ENCODE measurements at regions of chr1 and their contacts with region 1.

Region 1: DNA sequence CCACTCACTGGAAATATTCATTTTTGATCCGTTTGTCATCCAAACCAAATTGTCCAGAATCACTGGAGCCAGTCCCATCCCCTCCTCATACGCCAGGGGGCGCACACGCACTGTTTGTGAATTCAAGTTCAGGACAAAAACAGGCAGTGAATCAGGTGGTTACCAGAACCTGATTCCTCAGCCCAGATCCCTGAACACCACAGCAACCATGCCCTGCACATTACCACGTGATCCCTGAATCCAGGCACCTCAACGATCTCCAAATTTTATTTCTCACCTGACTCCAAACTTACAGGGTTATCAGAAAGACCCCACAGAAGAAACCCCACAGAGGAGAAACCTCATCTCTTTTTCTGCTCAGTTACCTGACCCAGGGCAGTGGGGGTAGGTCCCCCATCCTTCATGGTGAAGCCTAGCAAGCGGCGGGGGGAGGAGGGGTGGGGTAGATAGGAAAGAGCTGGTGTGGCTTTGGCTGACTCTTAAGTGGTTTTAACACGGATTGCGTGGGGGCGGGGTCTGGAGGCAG is 1.4 kb upstream of the PTPRF start:
- DNase-seq: peak in 41 of 42 donors; percentile 64 to 96 (median 86)

Region 2: DNA sequence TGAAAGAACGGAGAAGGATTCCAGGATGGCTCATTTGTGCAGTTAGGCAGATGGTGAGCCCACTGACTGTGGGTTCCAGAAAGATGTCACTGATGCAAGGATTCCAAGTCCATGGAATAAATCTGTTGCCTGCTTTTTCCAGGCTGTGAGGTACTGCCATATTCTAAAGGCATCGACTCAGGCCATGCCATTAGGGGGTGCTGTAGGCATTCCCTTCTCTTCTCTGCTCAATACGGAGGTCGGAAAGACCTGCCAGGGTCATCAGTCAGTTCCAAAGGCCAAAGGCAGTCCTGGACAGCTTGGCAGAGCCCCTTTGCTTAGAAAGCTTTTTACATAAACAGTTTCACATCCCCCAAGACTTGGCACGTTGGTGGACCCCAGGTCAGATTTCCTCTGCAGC is 291.2 kb before region 1 on chr1:
- intact Hi-C with region 1: loop called (anchors 10 kb)
- DNase-seq: peak; percentile 23 to 94 (median 84)

Region 3: GRCh38 chr1:43454266-43455011 is 74.8 kb before region 1 on chr1:
- intact Hi-C with region 1: loop called (anchors 10 kb)
- DNase-seq: peak; percentile 60 to 92 (median 80)

Region 4: GRCh38 chr1:43650310-43651085 is 121.2 kb after region 1 on chr1:
- intact Hi-C with region 1: loop called (anchors 2 kb)
- DNase-seq: peak; percentile 88 to 99 (median 95)

Region 5: GRCh38 chr1:43796111-43796581 is 266.9 kb after region 1 on chr1:
- intact Hi-C with region 1: no loop called
- DNase-seq: peak in 15 of 42 donors; percentile 3 to 48 (median 20)

Region 6: GRCh38 chr1:43934101-43934985 is 405.1 kb after region 1 on chr1:
- intact Hi-C with region 1: loop called (anchors 10 kb)
- DNase-seq: peak in 40 of 42 donors; percentile 46 to 89 (median 70)

Measured in head of caudate nucleus (tissue), 42 donors.